ENCODE measurements at regions of chr5 and their contacts with region 1.

Region 1: GRCh38 chr5:65624571-65625555 is at the starts of genes SHLD3 and TRAPPC13:
- DNase-seq: peak; percentile 79 to 82
- ATAC-seq: peak; percentile 94 to 95
- H3K4me3 ChIP-seq: peak within 1 kb of the TSS; percentile 87 to 98 (median 96)
- H3K27ac ChIP-seq: peak within 1 kb of the TSS; percentile 84 to 94 (median 86)
- H3K4me1 ChIP-seq: peaks cover 29 to 35% of the 10 kb centered on the region in 2 donors
- H3K27me3 ChIP-seq: no peaks in the 10 kb centered on the region
- CTCF ChIP-seq: peak in 3 of 5 experiments; percentile 11 to 24 (median 18)
- POLR2A ChIP-seq: peak in 1 of 2 donors; percentile 2
- total RNA-seq, gene SHLD3: 1.4 to 3.3 (median 2.4) TPM
- total RNA-seq, gene TRAPPC13: 11.2 to 21.3 (median 16.7) TPM

Region 2: GRCh38 chr5:65172486-65173129 is 452.3 kb before region 1 on chr5:
- in situ Hi-C with region 1: no loop called
- intact Hi-C with region 1: no loop called
- DNase-seq: no peak
- ATAC-seq: no peak
- H3K4me3 ChIP-seq: no peak overlapping the region
- H3K27ac ChIP-seq: no peak overlapping the region
- H3K4me1 ChIP-seq: no peaks in the 10 kb centered on the region
- H3K27me3 ChIP-seq: no peaks in the 10 kb centered on the region
- CTCF ChIP-seq: no peak
- POLR2A ChIP-seq: no peak

Region 3: GRCh38 chr5:65562731-65563701 is 61.8 kb before region 1 on chr5 and contains the starts of genes CENPK and PPWD1:
- in situ Hi-C with region 1: no loop called
- intact Hi-C with region 1: loop called (anchors 1 kb)
- DNase-seq: peak; percentile 90 to 91
- ATAC-seq: peak; percentile 100
- H3K4me3 ChIP-seq: peak within 1 kb of the TSS; percentile 65 to 90 (median 80)
- H3K27ac ChIP-seq: peak within 1 kb of the TSS; percentile 76 to 85 (median 82)
- H3K4me1 ChIP-seq: peaks cover 22 to 24% of the 10 kb centered on the region in 2 donors
- H3K27me3 ChIP-seq: no peaks in the 10 kb centered on the region
- CTCF ChIP-seq: no peak
- POLR2A ChIP-seq: peak; percentile 62 to 63
- total RNA-seq, gene CENPK: 0.56 TPM in 1 of 4 donors, not detected in the others
- total RNA-seq, gene PPWD1: 14.1 to 18.8 (median 16.6) TPM

Region 4: GRCh38 chr5:65721720-65722574 is 97.1 kb after region 1 on chr5 and contains the starts of genes NLN and SGTB:
- in situ Hi-C with region 1: no loop called
- intact Hi-C with region 1: loop called (anchors 5 kb)
- DNase-seq: peak; percentile 74 to 79
- ATAC-seq: peak; percentile 86 to 91
- H3K4me3 ChIP-seq: peak within 1 kb of the TSS; percentile 88 to 100 (median 93)
- H3K27ac ChIP-seq: peak within 1 kb of the TSS; percentile 85 to 90 (median 88)
- H3K4me1 ChIP-seq: peaks cover 28 to 52% of the 10 kb centered on the region in 2 donors
- H3K27me3 ChIP-seq: no peaks in the 10 kb centered on the region
- CTCF ChIP-seq: no peak
- POLR2A ChIP-seq: peak; percentile 63 to 72
- total RNA-seq, gene NLN: 20.4 to 29.9 (median 27.9) TPM
- total RNA-seq, gene SGTB: 3.6 to 6.6 (median 4.3) TPM

Region 5: GRCh38 chr5:65925601-65926275 is 300.9 kb after region 1 on chr5:
- in situ Hi-C with region 1: no loop called
- intact Hi-C with region 1: loop called (anchors 10 kb)
- DNase-seq: peak; percentile 69 to 79
- ATAC-seq: peak; percentile 69
- H3K4me3 ChIP-seq: peak overlapping the region; percentile 85 to 95 (median 92)
- H3K27ac ChIP-seq: peak overlapping the region; percentile 97 to 100 (median 99)
- H3K4me1 ChIP-seq: peaks cover 18% of the 10 kb centered on the region in 2 donors
- H3K27me3 ChIP-seq: no peaks in the 10 kb centered on the region
- CTCF ChIP-seq: peak in 4 of 5 experiments; percentile 41 to 50 (median 44)
- POLR2A ChIP-seq: peak; percentile 93 to 95

Region 6: GRCh38 chr5:66144074-66144833 is 519.4 kb after region 1 on chr5 and contains the start of gene SREK1:
- in situ Hi-C with region 1: no loop called
- intact Hi-C with region 1: loop called (anchors 1 kb)
- DNase-seq: peak; percentile 83 to 91
- ATAC-seq: peak; percentile 90 to 91
- H3K4me3 ChIP-seq: peak within 1 kb of the TSS; percentile 84 to 92 (median 88)
- H3K27ac ChIP-seq: peak within 1 kb of the TSS; percentile 94 to 99 (median 98)
- H3K4me1 ChIP-seq: peaks cover 33 to 40% of the 10 kb centered on the region in 2 donors
- H3K27me3 ChIP-seq: no peaks in the 10 kb centered on the region
- CTCF ChIP-seq: peak in 2 of 5 experiments; percentile 38 to 52
- POLR2A ChIP-seq: peak; percentile 81 to 82
- total RNA-seq, gene SREK1: 10.4 to 61.1 (median 12.3) TPM

Region 7: GRCh38 chr5:66171349-66172344 is 546.8 kb after region 1 on chr5:
- in situ Hi-C with region 1: loop called in 2 of 4 experiments (anchors 25 kb)
- intact Hi-C with region 1: no loop called
- DNase-seq: no peak
- ATAC-seq: no peak
- H3K4me3 ChIP-seq: no peak overlapping the region
- H3K27ac ChIP-seq: no peak overlapping the region
- H3K4me1 ChIP-seq: no peaks in the 10 kb centered on the region
- H3K27me3 ChIP-seq: no peaks in the 10 kb centered on the region
- CTCF ChIP-seq: peak in 2 of 5 experiments; percentile 31 to 48
- POLR2A ChIP-seq: no peak

Measured in gastrocnemius medialis (tissue), 4 donors.